CD4-positive, alpha-beta T cell (primary cell): ENCODE measurements at regions of chr1 and their contacts with region 1.

Region 1: DNA sequence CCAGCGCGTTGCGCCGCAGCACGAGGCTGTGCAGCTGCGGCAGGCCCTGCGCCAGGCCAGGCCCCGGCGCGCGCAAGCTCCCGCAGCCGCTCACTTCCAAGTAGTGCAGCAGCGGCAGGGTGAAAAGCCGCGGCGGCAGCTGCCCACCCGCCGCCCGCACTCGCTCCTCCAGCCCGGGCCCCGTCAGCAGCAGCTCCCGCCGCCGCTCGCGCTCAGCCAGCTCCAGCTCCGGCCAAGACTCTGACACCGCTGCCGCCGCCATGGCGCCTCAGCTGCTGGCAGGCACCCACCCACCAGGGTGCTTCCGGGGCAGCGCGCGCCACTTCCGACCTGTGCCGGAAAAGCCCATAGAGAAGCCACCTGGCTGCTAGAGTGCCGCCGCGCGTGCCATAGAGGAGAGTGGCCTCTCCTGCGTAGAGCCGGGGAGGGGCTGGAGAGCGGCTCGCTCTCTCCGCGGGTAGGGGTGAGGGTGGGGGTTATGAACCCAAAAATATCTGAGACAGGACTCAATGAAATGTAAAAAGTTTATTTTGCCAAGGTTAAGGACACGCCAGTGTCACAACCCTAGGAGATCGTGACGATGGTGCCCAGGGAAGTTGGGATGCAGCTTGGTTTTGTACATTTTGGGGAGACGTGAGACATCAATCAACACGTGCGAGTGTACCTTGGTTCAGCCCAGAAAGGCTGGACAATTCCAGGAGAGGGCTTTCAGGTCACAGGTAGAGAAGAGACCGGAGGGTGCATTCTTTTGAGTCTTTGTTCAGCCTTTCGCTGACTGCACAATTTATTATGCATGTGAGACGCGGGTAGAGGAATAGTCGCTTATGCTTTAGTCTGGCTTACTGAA is at the start of gene LRRC47:
- DNase-seq: peak; percentile 92 to 96 (median 94)
- ATAC-seq: peak; percentile 100
- H3K4me3 ChIP-seq: peak within 1 kb of the TSS; percentile 73
- H3K4me3 Mint-ChIP-seq: peak within 1 kb of the TSS; percentile 95
- H3K27ac ChIP-seq: peak within 1 kb of the TSS in 1 of 2 donors; percentile 52
- H3K27ac Mint-ChIP-seq: peak within 1 kb of the TSS; percentile 82
- H3K4me1 ChIP-seq: peaks cover 40% of the 10 kb centered on the region
- H3K4me1 Mint-ChIP-seq: peaks cover 54% of the 10 kb centered on the region
- H3K27me3 ChIP-seq: peaks cover 4 to 7% of the 10 kb centered on the region in 2 experiments
- H3K27me3 Mint-ChIP-seq: peaks cover 18% of the 10 kb centered on the region
- CTCF ChIP-seq: no peak
- total RNA-seq, gene LRRC47: 30.1 to 32.0 TPM

Region 2: DNA sequence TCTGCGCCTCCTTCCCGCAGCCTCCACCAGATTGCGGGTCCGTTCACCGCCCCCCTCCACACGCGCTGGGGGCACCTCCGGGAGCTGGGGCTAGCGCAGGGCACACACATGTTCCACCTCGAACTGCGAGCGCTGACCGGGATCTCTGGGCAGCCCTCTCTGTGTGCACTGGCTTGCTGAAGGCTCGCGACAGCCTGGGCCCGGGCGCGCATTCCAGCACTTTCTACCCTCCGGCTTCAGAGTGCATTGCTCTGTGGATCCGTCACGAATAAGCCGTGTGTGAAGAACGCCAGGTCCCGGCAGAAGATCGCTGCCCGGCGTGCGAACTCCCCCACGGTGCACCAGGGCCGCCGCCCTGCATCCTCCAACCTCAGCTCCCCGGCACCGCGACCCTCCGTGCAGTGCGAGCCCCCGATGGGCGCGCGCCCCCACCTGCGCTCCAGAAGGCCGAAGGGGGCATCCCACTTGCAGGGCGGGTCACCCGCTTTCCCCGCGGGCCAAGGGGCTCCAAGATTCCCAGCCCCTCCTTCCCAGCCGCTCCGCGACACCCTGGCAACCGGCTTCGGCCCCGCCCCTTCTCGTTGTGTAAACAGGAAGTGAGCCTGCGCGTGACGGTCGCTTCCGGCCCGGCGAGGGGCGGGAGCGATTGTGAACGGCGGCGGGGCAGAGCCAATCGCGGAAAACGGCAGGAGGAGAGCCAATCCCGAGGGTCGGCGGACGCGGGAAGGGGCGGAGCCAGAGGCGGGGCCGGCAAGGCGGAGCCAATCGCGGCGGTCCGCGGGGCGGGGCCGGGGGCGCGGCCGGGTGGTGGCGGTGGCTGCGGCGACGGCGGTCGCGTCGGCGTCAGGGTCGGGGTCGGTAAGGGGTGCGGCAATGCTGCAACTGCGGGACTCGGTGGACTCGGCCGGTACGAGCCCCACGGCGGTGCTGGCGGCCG is 172.0 kb before region 1 on chr1 and contains the start of gene TPRG1L:
- CTCF ChIA-PET with region 1: interaction called, 3 read pairs
- POLR2A ChIA-PET with region 1: no interaction called
- intact Hi-C with region 1: loop called in 1 of 2 experiments (anchors 2 kb)
- DNase-seq: peak; percentile 97 to 99 (median 98)
- ATAC-seq: peak; percentile 92
- H3K4me3 ChIP-seq: peak within 1 kb of the TSS; percentile 93
- H3K4me3 Mint-ChIP-seq: peak within 1 kb of the TSS; percentile 96
- H3K27ac ChIP-seq: peak within 1 kb of the TSS; percentile 29 to 64
- H3K27ac Mint-ChIP-seq: peak within 1 kb of the TSS; percentile 98
- H3K4me1 ChIP-seq: peaks cover 34% of the 10 kb centered on the region
- H3K4me1 Mint-ChIP-seq: peaks cover 51% of the 10 kb centered on the region
- H3K27me3 ChIP-seq: no peaks in the 10 kb centered on the region
- H3K27me3 Mint-ChIP-seq: no peaks in the 10 kb centered on the region
- CTCF ChIP-seq: no peak
- total RNA-seq, gene TPRG1L: 46.5 to 48.3 TPM

Region 3: DNA sequence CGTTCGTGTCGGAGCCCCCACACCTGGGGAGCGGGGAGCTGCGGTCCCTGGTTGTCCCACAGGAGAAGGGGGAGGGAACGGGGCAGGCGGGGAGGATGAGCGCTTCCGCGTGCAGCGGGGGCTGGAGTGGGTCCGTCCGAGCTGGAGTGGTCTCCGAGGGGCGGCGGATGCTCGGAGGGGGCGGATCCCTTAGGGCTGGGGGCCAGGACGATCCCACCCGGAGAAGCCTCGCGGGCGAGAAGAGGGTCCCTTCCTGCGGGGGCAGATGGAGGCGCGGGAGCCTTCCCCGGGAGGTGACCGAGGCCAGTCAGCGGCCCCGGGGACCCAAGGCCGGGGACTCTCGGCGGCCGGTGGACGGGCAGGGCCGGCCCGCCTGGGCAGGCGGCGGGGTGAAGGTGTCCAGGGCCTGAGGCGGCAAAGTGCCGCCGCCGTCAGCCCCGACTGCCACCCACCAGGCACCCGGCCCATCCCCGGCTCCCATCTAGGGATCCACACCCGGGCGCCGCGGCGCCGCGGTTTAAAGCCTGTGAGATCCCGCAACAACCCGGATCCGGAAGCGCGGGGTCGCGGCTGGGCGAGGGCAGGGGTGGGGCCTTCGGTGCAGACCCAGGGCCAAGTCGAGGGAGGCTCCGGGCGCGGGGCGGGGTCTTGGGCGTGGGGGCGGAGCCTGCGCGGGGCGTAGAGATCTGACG is 49.5 kb before region 1 on chr1:
- CTCF ChIA-PET with region 1: no interaction called
- POLR2A ChIA-PET with region 1: interaction called, 4 read pairs
- intact Hi-C with region 1: loop called in 1 of 2 experiments (anchors 1 kb)
- DNase-seq: peak; percentile 76 to 94 (median 88)
- ATAC-seq: peak; percentile 98
- H3K4me3 ChIP-seq: peak overlapping the region; percentile 57
- H3K4me3 Mint-ChIP-seq: peak overlapping the region; percentile 79
- H3K27ac ChIP-seq: peak overlapping the region; percentile 26 to 29
- H3K27ac Mint-ChIP-seq: peak overlapping the region; percentile 65
- H3K4me1 ChIP-seq: peaks cover 29% of the 10 kb centered on the region
- H3K4me1 Mint-ChIP-seq: peaks cover 34% of the 10 kb centered on the region
- H3K27me3 ChIP-seq: no peaks in the 10 kb centered on the region
- H3K27me3 Mint-ChIP-seq: no peaks in the 10 kb centered on the region
- CTCF ChIP-seq: no peak

Region 4: DNA sequence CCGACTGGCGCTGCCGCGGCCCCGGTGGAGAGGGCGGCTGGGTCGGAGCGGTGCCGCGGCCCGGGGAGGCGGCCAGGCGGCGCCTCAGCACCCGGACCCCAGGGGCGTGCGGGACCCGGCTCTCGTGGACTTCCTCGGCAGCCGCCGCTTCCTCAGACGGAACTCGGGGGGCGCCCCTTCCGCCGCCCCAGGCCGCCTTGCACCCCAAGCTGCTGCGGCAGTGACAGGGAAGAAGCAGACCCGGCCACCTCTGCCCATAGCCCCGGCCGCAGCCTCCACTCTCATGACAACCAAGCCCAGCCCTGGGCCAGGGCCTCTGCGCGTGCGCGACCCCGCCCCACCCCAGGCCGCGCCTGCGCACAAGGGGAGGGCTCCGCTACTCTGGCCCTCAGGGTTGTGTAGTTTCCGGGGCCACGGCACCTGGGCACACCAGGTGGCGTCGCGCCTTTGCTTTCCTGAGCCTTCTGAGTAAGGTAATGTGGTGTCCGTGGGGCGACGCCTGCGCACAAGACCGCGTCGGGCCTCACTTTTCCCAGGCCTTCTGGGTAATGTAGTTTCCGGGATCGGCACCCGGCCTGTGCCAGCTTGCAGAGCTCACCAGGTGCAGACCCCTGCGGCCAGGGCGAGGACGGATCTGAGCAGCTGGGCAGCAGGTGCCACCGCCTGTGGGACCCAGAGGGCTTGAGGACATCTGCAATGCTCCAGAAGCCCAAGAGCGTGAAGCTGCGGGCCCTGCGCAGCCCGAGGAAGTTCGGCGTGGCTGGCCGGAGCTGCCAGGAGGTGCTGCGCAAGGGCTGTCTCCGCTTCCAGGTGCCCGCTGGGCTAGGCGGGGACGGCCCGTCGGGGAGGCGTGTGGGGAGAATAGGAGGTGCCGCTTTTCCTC is 60.7 kb after region 1 on chr1 and contains the starts of genes CEP104 and DFFB:
- CTCF ChIA-PET with region 1: interaction called, 3 read pairs
- POLR2A ChIA-PET with region 1: interaction called, 9 read pairs
- intact Hi-C with region 1: loop called (anchors 2 kb)
- DNase-seq: peak; percentile 93 to 99 (median 98)
- ATAC-seq: peak; percentile 98
- H3K4me3 ChIP-seq: peak within 1 kb of the TSS; percentile 87
- H3K4me3 Mint-ChIP-seq: peak within 1 kb of the TSS; percentile 100
- H3K27ac ChIP-seq: peak within 1 kb of the TSS; percentile 49 to 54
- H3K27ac Mint-ChIP-seq: peak within 1 kb of the TSS; percentile 87
- H3K4me1 ChIP-seq: peaks cover 40% of the 10 kb centered on the region
- H3K4me1 Mint-ChIP-seq: peaks cover 43% of the 10 kb centered on the region
- H3K27me3 ChIP-seq: no peaks in the 10 kb centered on the region
- H3K27me3 Mint-ChIP-seq: no peaks in the 10 kb centered on the region
- CTCF ChIP-seq: peak; percentile 54
- total RNA-seq, gene CEP104: 16.6 to 20.5 TPM
- total RNA-seq, gene DFFB: 6.7 to 6.8 TPM

Region 5: DNA sequence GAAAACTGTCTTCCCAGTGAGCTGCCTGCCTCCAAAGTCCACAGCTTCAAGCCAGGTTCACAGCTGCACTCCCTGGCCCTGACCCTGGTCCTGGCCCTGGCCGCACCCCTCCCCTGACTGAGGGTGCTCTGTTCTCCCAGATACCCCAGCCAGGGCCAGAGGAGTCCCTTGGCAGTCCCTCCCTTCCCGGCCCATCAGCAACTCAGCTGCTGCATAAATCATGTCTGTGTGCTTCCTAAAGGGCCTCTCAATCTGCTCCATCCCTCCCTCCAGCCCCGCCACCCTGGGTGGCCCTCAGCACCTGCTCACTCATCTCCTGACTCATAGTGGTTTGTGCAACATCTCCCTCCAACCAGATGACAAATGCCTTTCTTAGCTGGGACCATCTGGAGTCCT is 128.4 kb after region 1 on chr1:
- CTCF ChIA-PET with region 1: no interaction called
- POLR2A ChIA-PET with region 1: no interaction called
- intact Hi-C with region 1: no loop called
- DNase-seq: no peak
- ATAC-seq: no peak
- H3K4me3 ChIP-seq: no peak overlapping the region
- H3K4me3 Mint-ChIP-seq: no peak overlapping the region
- H3K27ac ChIP-seq: no peak overlapping the region
- H3K27ac Mint-ChIP-seq: no peak overlapping the region
- H3K4me1 ChIP-seq: peaks cover 3% of the 10 kb centered on the region
- H3K4me1 Mint-ChIP-seq: no peaks in the 10 kb centered on the region
- H3K27me3 ChIP-seq: no peaks in the 10 kb centered on the region
- H3K27me3 Mint-ChIP-seq: peaks cover 6% of the 10 kb centered on the region
- CTCF ChIP-seq: no peak